IMR-90 (cell line): ENCODE measurements at regions of chr1 and their contacts with region 1.

Region 1: GRCh38 chr1:190478149-190479049 is 735 bp upstream of the BRINP3 start:
- DNase-seq: peak; percentile 37
- ATAC-seq: peak; percentile 44
- H3K4me3 ChIP-seq: peak overlapping the region; percentile 52
- H3K27ac ChIP-seq: no peak overlapping the region
- H3K4me1 ChIP-seq: no peaks in the 10 kb centered on the region
- H3K27me3 ChIP-seq: no peaks in the 10 kb centered on the region; the same call in 1 of the 2 replicates
- CTCF ChIP-seq: no peak
- POLR2A ChIP-seq: no peak
- RAD21 ChIP-seq: no peak

Region 2: DNA sequence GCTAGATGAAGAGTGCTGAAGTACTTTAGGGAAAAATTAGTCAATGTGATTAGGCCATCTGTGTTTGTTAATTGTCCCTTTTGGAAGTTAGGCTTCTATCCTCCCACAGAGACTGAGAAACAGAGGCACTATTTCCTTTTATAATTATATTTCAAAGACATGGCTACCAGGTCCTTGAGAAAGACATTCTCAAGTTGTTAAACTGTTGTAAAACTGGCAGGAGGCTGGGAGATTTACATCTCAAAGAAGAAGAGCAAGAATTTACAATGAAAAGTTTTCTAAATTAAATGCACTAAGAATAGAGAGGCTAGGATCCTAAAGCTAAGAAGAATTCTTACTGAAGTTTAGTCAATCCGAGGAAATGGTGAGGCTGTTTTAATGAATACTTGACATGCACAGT is 73.2 kb after region 1 on chr1:
- CTCF ChIA-PET with region 1: no interaction called
- POLR2A ChIA-PET with region 1: no interaction called
- dilution Hi-C with region 1: no loop called
- in situ Hi-C with region 1: no loop called
- intact Hi-C with region 1: no loop called
- DNase-seq: no peak
- ATAC-seq: no peak
- H3K4me3 ChIP-seq: no peak overlapping the region
- H3K27ac ChIP-seq: no peak overlapping the region
- H3K4me1 ChIP-seq: no peaks in the 10 kb centered on the region
- H3K27me3 ChIP-seq: no peaks in the 10 kb centered on the region
- CTCF ChIP-seq: no peak
- POLR2A ChIP-seq: no peak
- RAD21 ChIP-seq: no peak

Region 3: GRCh38 chr1:190754666-190755065 is 276.3 kb after region 1 on chr1:
- CTCF ChIA-PET with region 1: no interaction called
- POLR2A ChIA-PET with region 1: no interaction called
- dilution Hi-C with region 1: no loop called
- in situ Hi-C with region 1: no loop called
- intact Hi-C with region 1: loop called (anchors 10 kb)
- DNase-seq: peak; percentile 85
- ATAC-seq: peak; percentile 66
- H3K4me3 ChIP-seq: no peak overlapping the region
- H3K27ac ChIP-seq: no peak overlapping the region
- H3K4me1 ChIP-seq: no peaks in the 10 kb centered on the region
- H3K27me3 ChIP-seq: no peaks in the 10 kb centered on the region
- CTCF ChIP-seq: 0 out of 2 replicates have a peak, but pooled peaks have one; percentile 26
- POLR2A ChIP-seq: no peak
- RAD21 ChIP-seq: peak; percentile 25; the same call in 1 of the 2 replicates

Region 4: GRCh38 chr1:190832511-190832910 is 354.1 kb after region 1 on chr1:
- CTCF ChIA-PET with region 1: no interaction called
- POLR2A ChIA-PET with region 1: no interaction called
- dilution Hi-C with region 1: no loop called
- in situ Hi-C with region 1: no loop called
- intact Hi-C with region 1: no loop called
- DNase-seq: peak; percentile 1
- ATAC-seq: no peak; the same call in 1 of the 2 replicates
- H3K4me3 ChIP-seq: no peak overlapping the region
- H3K27ac ChIP-seq: no peak overlapping the region
- H3K4me1 ChIP-seq: no peaks in the 10 kb centered on the region
- H3K27me3 ChIP-seq: no peaks in the 10 kb centered on the region
- CTCF ChIP-seq: no peak
- POLR2A ChIP-seq: no peak
- RAD21 ChIP-seq: no peak